ENCODE measurements at regions of chr1 and their contacts with region 1.

Region 1: GRCh38 chr1:212455803-212456528 is 23.2 kb downstream of the NENF start:
- DNase-seq: peak; percentile 84
- ATAC-seq: peak; percentile 85
- H3K4me3 ChIP-seq: no peak overlapping the region
- H3K4me3 Mint-ChIP-seq: no peak overlapping the region
- H3K27ac ChIP-seq: no peak overlapping the region
- H3K27ac Mint-ChIP-seq: no peak overlapping the region
- H3K4me1 ChIP-seq: peaks cover 0 to 6% of the 10 kb centered on the region in 2 donors
- H3K4me1 Mint-ChIP-seq: no peaks in the 10 kb centered on the region
- H3K27me3 ChIP-seq: peaks cover 0 to 4% (median 0%) of the 10 kb centered on the region in 4 experiments
- H3K27me3 Mint-ChIP-seq: no peaks in the 10 kb centered on the region
- CTCF ChIP-seq: peak; percentile 99

Region 2: GRCh38 chr1:211680752-211681327 is 775.1 kb before region 1 on chr1:
- CTCF ChIA-PET with region 1: interaction called, 81 read pairs
- POLR2A ChIA-PET with region 1: no interaction called
- intact Hi-C with region 1: loop called (anchors 1 kb)
- DNase-seq: peak; percentile 89
- ATAC-seq: peak; percentile 90
- H3K4me3 ChIP-seq: no peak overlapping the region
- H3K4me3 Mint-ChIP-seq: peak overlapping the region; percentile 44
- H3K27ac ChIP-seq: peak overlapping the region; percentile 70 to 81
- H3K27ac Mint-ChIP-seq: peak overlapping the region; percentile 87
- H3K4me1 ChIP-seq: peaks cover 24 to 35% of the 10 kb centered on the region in 2 donors
- H3K4me1 Mint-ChIP-seq: peaks cover 52% of the 10 kb centered on the region
- H3K27me3 ChIP-seq: no peaks in the 10 kb centered on the region
- H3K27me3 Mint-ChIP-seq: no peaks in the 10 kb centered on the region
- CTCF ChIP-seq: peak; percentile 86

Region 3: DNA sequence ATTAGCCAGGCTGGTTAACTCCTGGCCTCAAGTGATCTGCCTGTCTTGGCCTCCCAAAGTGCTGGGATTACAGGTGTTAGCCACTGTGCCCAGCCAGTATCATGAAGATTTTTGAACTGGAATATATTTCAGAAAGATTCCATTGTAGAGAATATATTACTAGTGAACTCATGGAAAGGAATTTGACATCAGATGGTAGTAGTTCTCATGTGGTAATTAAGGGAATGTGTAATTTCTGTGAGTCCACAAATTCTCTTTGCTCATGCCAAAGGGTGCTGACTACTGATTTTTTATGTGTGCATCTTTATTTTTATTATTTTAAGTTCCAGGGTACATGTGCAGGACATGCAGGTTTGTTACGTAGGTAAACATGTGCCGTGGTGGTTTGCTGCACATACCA is 410.0 kb before region 1 on chr1:
- CTCF ChIA-PET with region 1: interaction called, 14 read pairs
- POLR2A ChIA-PET with region 1: no interaction called
- intact Hi-C with region 1: no loop called
- DNase-seq: no peak
- ATAC-seq: no peak
- H3K4me3 ChIP-seq: no peak overlapping the region
- H3K4me3 Mint-ChIP-seq: no peak overlapping the region
- H3K27ac ChIP-seq: no peak overlapping the region
- H3K27ac Mint-ChIP-seq: no peak overlapping the region
- H3K4me1 ChIP-seq: peaks cover 0 to 1% of the 10 kb centered on the region in 2 donors
- H3K4me1 Mint-ChIP-seq: peaks cover under 1% of the 10 kb centered on the region
- H3K27me3 ChIP-seq: no peaks in the 10 kb centered on the region
- H3K27me3 Mint-ChIP-seq: no peaks in the 10 kb centered on the region
- CTCF ChIP-seq: no peak

Region 4: DNA sequence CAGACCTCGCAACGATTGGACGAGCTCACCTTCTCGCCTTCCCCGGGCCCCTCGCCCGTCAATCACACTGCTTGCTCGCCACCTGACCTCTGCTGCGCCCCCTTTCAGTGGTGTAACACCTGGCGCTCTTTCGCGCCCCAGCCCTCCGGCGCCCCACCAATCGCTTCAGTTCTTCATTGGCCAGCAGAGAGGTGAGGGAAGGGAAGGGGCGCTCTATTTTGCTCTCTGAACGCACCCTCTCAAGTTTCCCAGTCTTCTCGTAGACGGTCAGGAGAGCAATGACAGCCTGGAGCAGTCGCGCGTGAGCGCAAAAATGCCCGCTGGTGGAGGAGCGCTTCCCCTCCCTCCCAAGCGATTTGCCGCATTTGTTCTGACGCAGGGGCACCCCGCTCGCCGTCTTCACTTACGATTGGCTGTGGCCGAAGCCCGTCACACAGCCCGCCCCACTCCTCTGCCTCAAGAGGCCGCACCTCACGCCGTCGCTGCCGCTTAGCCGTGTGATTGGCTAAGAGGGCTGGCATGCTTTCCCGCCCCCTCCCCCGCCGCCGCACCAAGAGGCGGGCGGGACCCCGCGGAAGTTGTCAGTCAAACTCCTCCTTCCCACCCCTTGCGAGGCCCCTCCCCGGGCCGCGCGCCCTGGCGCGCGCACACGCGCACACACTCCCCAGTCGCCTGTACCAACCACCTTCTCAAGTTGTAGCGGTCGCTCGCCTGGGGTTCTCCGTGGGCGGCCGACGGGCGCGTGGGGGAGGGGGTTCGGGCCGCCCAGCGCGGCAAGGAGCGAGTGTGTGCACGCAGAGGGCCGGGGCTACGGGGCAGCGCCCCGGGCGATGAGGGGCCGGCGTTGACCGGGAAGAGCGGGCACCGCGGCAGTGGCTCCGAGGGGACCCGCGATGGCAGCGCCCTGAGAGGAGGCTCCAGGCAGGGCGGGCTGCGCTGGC is 171.0 kb before region 1 on chr1 and contains the start of gene PPP2R5A:
- CTCF ChIA-PET with region 1: interaction called, 37 read pairs
- POLR2A ChIA-PET with region 1: no interaction called
- intact Hi-C with region 1: no loop called
- DNase-seq: peak; percentile 100
- ATAC-seq: peak; percentile 85
- H3K4me3 ChIP-seq: peak within 1 kb of the TSS; percentile 75 to 97 (median 92)
- H3K4me3 Mint-ChIP-seq: peak within 1 kb of the TSS; percentile 93
- H3K27ac ChIP-seq: peak within 1 kb of the TSS; percentile 89 to 90
- H3K27ac Mint-ChIP-seq: peak within 1 kb of the TSS; percentile 96
- H3K4me1 ChIP-seq: peaks cover 22 to 28% of the 10 kb centered on the region in 2 donors
- H3K4me1 Mint-ChIP-seq: peaks cover 41% of the 10 kb centered on the region
- H3K27me3 ChIP-seq: no peaks in the 10 kb centered on the region
- H3K27me3 Mint-ChIP-seq: no peaks in the 10 kb centered on the region
- CTCF ChIP-seq: peak; percentile 62
- total RNA-seq, gene PPP2R5A: 41.1 and 43.4 TPM in 2 replicates

Region 5: DNA sequence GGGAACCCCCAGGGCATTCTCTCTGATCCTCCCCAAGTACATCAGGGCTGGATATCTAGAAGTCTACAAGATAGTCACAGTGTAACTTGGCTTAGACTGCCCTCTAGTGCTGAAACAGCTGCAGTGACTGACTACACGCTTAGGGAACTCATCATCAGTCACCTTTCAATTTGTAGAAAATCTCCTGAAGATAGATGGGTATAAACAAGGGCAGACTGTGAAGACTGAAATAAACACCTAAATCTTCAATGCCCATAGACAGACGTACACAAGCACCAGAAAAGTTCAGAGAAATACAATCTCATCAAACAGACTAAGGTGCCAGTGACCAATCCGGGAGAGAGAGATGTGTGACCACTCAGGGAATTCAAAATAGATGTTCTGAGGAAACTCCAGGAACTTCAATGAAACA is 87.9 kb before region 1 on chr1:
- CTCF ChIA-PET with region 1: interaction called, 104 read pairs
- POLR2A ChIA-PET with region 1: no interaction called
- intact Hi-C with region 1: loop called (anchors 1 kb)
- DNase-seq: peak; percentile 72
- ATAC-seq: peak; percentile 80
- H3K4me3 ChIP-seq: no peak overlapping the region
- H3K4me3 Mint-ChIP-seq: no peak overlapping the region
- H3K27ac ChIP-seq: no peak overlapping the region
- H3K27ac Mint-ChIP-seq: no peak overlapping the region
- H3K4me1 ChIP-seq: no peaks in the 10 kb centered on the region
- H3K4me1 Mint-ChIP-seq: peaks cover 2% of the 10 kb centered on the region
- H3K27me3 ChIP-seq: no peaks in the 10 kb centered on the region
- H3K27me3 Mint-ChIP-seq: no peaks in the 10 kb centered on the region
- CTCF ChIP-seq: peak; percentile 86

Region 6: DNA sequence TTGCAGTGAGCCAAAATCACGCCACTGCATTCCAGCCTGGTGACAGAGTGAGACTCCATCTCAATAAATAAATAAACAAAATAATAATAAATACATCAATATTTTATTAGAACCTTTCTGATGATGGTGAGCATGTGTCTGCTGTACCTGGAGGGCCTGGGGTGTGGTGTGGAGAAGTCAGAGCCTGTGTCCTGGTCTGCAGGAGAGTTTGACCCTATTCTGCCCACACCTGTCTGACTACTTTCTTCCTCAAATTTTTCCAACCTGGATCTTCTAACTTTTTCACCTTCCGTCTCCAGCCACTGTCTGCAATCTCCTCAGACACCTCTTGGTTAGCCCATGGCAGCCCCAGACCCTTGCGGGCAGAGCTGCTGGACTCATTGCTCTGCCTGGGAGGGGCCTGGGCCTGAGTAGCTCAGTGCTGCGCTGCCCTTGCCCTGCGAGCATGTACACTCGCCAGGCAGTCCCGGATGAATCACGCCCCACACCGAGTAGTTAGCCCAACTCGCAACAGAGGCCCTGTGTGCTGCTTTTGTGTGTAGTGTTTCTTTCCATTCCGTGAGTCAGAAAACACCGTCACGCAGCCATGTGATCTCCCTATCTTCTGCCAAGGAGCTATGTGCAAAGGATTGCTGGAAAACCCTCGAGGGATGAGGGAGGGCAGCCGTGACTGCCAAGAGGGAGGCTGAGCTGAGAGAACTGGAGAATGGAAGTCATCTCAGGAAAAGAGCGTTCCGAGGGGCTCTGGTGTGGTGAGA is 13.9 kb after region 1 on chr1:
- CTCF ChIA-PET with region 1: interaction called, 23 read pairs
- POLR2A ChIA-PET with region 1: no interaction called
- intact Hi-C with region 1: no loop called
- DNase-seq: no peak
- ATAC-seq: no peak
- H3K4me3 ChIP-seq: no peak overlapping the region
- H3K4me3 Mint-ChIP-seq: no peak overlapping the region
- H3K27ac ChIP-seq: no peak overlapping the region
- H3K27ac Mint-ChIP-seq: no peak overlapping the region
- H3K4me1 ChIP-seq: no peaks in the 10 kb centered on the region
- H3K4me1 Mint-ChIP-seq: no peaks in the 10 kb centered on the region
- H3K27me3 ChIP-seq: no peaks in the 10 kb centered on the region
- H3K27me3 Mint-ChIP-seq: peaks cover 12% of the 10 kb centered on the region
- CTCF ChIP-seq: no peak

Region 7: DNA sequence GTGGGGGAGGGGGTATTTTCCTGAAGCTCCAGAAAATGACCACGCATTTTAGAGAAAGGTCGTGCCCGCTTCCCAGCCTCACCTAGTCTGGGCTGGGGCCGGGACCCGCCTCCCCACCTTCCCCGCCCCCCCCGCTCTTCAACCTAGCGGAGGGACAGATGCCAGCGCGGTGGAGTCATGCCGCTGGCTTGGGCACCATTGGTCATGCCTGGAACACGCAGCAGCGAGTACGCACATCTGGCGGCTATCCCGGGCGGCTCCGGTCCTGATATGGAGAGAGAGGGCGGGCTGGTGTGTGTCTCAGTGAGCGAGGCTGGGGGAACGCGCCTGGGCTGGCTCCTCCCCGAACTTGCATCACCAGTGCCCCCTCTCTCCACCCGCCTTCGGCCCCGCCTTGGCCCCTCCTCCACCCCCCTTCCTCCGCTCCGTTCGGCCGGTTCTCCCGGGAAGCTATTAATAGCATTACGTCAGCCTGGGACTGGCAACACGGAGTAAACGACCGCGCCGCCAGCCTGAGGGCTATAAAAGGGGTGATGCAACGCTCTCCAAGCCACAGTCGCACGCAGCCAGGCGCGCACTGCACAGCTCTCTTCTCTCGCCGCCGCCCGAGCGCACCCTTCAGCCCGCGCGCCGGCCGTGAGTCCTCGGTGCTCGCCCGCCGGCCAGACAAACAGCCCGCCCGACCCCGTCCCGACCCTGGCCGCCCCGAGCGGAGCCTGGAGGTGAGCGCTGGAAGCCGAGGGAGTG is 152.4 kb after region 1 on chr1 and contains the start of gene ATF3:
- CTCF ChIA-PET with region 1: no interaction called
- POLR2A ChIA-PET with region 1: no interaction called
- intact Hi-C with region 1: no loop called
- DNase-seq: peak; percentile 91
- ATAC-seq: peak; percentile 80
- H3K4me3 ChIP-seq: peak within 1 kb of the TSS; percentile 53 to 76 (median 72)
- H3K4me3 Mint-ChIP-seq: peak within 1 kb of the TSS; percentile 97
- H3K27ac ChIP-seq: peak within 1 kb of the TSS in 1 of 2 donors; percentile 54
- H3K27ac Mint-ChIP-seq: peak within 1 kb of the TSS; percentile 87
- H3K4me1 ChIP-seq: peaks cover 28 to 32% of the 10 kb centered on the region in 2 donors
- H3K4me1 Mint-ChIP-seq: peaks cover 28% of the 10 kb centered on the region
- H3K27me3 ChIP-seq: peaks cover 0 to 63% (median 36%) of the 10 kb centered on the region in 4 experiments
- H3K27me3 Mint-ChIP-seq: peaks cover 52% of the 10 kb centered on the region
- CTCF ChIP-seq: no peak
- total RNA-seq, gene ATF3: 2.7 and 4.5 TPM in 2 replicates